HepG2 (cell line): ENCODE measurements at regions of chr2 and their contacts with region 1.

Region 1: GRCh38 chr2:35871672-35872071 is 483.9 kb upstream of the CRIM1 start:
- DNase-seq: peak; percentile 15
- ATAC-seq: peak; percentile 85
- H3K4me3 ChIP-seq: no peak overlapping the region
- H3K27ac ChIP-seq: no peak overlapping the region
- H3K4me1 ChIP-seq: no peaks in the 10 kb centered on the region
- H3K27me3 ChIP-seq: no peaks in the 10 kb centered on the region
- CTCF ChIP-seq: peak; percentile 67
- EP300 ChIP-seq: no peak
- POLR2A ChIP-seq: no peak
- RAD21 ChIP-seq: peak; percentile 23; the same call in 1 of the 2 replicates

Region 2: DNA sequence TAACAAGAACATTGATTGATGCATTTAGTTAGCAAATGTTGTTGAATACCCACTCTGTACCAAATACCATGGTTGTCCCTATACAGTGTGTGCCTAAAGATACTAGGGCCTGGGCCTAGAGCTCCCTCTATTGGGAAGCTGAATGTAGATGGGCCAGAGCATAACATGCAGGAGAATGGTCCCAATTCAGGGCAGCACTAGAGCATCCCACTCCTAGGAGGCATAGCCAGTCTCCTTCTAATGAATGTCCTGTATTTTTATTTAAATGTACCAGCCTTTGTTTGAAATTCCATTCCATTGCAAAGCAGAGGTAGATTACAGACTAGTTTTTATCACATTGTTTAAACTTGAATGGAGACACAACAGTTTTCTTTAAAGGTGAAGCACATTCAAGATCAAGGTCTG is 635.7 kb after region 1 on chr2:
- CTCF ChIA-PET with region 1: no interaction called
- POLR2A ChIA-PET with region 1: no interaction called
- in situ Hi-C with region 1: no loop called
- intact Hi-C with region 1: loop called (anchors 2 kb)
- DNase-seq: peak; percentile 79
- ATAC-seq: peak; percentile 92
- H3K4me3 ChIP-seq: no peak overlapping the region
- H3K27ac ChIP-seq: no peak overlapping the region
- H3K4me1 ChIP-seq: peaks cover 41% of the 10 kb centered on the region
- H3K27me3 ChIP-seq: no peaks in the 10 kb centered on the region
- CTCF ChIP-seq: peak; percentile 91
- EP300 ChIP-seq: no peak
- POLR2A ChIP-seq: no peak
- RAD21 ChIP-seq: peak; percentile 86

Region 3: DNA sequence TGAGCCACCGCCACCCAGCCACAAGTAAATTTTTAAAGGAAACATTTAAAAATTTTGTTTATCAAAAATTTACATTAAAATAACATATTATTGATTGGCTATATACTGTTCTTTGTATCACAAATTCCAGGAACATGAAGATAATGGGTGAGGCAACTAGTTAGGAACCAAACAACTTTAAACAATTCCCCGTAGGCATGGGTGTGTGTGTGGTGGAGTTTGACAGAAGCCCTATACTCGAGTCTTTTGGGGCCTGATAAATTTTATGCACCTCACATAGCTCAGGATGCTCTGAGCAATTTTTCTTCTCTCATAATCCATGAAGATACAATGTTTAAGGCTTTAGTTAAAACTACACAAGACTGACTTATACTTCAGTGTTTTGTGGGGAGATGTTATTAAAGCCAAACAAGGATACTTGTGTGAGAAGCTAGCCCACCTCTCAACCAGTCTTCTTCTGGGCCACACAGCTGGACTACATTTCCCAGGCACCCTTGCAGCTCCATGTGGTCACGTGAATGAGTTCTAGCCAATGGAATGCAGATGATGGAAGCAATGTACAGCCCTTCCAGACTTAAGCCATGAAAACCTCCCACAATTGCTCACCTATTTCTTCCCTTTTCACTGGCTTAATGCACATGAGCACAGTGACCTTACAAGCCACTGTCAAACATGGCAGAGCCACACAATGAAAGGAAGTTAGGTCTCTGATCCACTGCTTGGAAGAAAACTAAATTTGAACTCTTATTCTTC is 746.5 kb after region 1 on chr2:
- CTCF ChIA-PET with region 1: no interaction called
- POLR2A ChIA-PET with region 1: no interaction called
- in situ Hi-C with region 1: no loop called
- intact Hi-C with region 1: no loop called
- DNase-seq: peak; percentile 83
- ATAC-seq: peak; percentile 98
- H3K4me3 ChIP-seq: no peak overlapping the region
- H3K27ac ChIP-seq: no peak overlapping the region
- H3K4me1 ChIP-seq: no peaks in the 10 kb centered on the region
- H3K27me3 ChIP-seq: peaks cover 1 to 5% of the 10 kb centered on the region in 2 experiments; a peak in 1 of 5 replicates
- CTCF ChIP-seq: no peak
- EP300 ChIP-seq: no peak
- POLR2A ChIP-seq: no peak
- RAD21 ChIP-seq: no peak

Region 4: GRCh38 chr2:36672199-36672598 is 800.5 kb after region 1 on chr2:
- CTCF ChIA-PET with region 1: interaction called, 5 read pairs
- POLR2A ChIA-PET with region 1: no interaction called
- in situ Hi-C with region 1: loop called (anchors 10 kb)
- intact Hi-C with region 1: loop called (anchors 1 kb)
- DNase-seq: peak; percentile 52
- ATAC-seq: peak; percentile 73
- H3K4me3 ChIP-seq: no peak overlapping the region
- H3K27ac ChIP-seq: no peak overlapping the region
- H3K4me1 ChIP-seq: no peaks in the 10 kb centered on the region
- H3K27me3 ChIP-seq: no peaks in the 10 kb centered on the region
- CTCF ChIP-seq: peak; percentile 68
- EP300 ChIP-seq: no peak
- POLR2A ChIP-seq: no peak
- RAD21 ChIP-seq: peak; percentile 67